ENCODE measurements at regions of chr17 and their contacts with region 1.

Region 1: DNA sequence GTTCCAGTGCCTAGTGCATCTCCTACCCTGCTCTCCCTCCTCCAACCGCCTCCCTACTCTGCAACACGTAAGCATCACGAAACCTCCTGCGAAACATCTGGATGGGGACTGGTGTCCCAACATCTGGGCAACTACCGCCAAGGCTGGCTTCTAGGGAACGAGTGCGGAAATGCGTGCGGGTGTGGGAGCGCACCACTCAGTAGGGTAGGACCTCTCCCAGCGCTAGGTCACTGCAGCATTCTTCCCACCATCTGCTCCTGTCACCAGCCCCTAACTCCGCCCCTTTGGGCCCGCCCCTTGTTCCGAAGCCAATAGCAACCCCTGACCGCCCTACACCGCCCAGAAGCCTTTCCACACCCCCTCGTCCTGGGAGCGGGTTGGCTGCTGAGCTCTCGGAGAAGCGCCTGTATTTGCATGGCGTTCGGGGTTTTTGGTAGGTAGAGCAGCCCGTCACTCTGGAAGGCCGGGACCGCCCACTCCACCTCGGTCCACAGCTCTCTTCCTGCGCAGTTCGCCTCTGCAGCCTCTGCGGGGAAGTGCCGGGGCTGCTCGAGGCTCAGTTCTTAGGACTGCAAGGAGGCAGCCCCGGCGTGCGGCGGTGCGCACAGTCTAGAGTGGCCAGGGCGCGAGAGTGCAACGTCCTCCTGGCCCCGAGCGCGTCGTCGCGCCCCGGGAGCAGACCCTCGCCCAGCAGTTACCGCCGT is at the start of gene HS3ST3B1:
- DNase-seq: peak; percentile 89
- H3K4me3 ChIP-seq: peak within 1 kb of the TSS in 1 of 3 experiments; percentile 24
- H3K27ac ChIP-seq: no peak within 1 kb of the TSS
- H3K4me1 ChIP-seq: peaks cover 23% of the 10 kb centered on the region
- H3K27me3 ChIP-seq: peaks cover 72 to 96% of the 10 kb centered on the region in 2 experiments
- CTCF ChIP-seq: no peak
- POLR2A ChIP-seq: no peak
- total RNA-seq, gene HS3ST3B1: not detected in 2 replicates

Region 2: GRCh38 chr17:13337864-13338371 is 962.8 kb before region 1 on chr17:
- CTCF ChIA-PET with region 1: interaction called, 13 read pairs
- POLR2A ChIA-PET with region 1: no interaction called
- dilution Hi-C with region 1: no loop called
- intact Hi-C with region 1: loop called (anchors 1 kb)
- DNase-seq: peak; percentile 18
- H3K4me3 ChIP-seq: no peak overlapping the region
- H3K27ac ChIP-seq: no peak overlapping the region
- H3K4me1 ChIP-seq: no peaks in the 10 kb centered on the region
- H3K27me3 ChIP-seq: no peaks in the 10 kb centered on the region
- CTCF ChIP-seq: peak; percentile 42 to 48
- POLR2A ChIP-seq: no peak

Region 3: DNA sequence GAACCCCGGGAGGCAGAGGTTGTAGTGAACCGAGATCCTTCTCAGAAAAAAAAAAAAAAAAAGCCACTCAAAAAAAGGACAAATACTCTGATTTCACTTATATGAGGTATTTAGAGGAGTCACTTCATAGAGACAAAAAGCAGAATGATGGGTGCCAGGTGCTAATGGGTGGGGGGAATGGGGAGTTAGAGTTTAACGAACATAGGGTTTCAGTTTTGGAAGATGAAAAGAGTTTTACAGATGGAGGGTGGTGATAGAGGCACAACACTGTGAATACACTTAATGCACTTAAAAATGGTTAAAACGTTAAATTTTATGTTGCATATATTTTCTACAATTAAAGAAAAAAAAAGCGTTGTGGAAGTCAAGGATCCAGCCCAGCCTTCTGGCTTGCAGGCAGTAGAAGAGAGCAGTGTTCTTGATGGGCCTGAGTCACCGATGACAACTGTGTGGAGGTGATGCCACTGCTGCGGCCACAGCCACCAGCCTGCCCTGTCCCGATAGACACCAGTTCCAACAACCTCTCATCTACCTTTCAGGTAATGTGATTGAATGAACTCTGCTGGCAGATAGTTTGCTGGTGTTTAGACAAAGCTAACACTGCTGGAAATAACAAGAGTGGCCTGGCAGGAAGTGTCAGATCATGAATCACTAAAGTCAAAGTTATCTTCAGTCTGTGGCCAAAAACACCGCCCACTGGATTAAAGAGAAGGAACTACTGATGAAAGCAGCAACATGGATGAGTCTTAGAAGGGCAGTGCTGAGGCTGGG is 281.4 kb before region 1 on chr17:
- CTCF ChIA-PET with region 1: no interaction called
- POLR2A ChIA-PET with region 1: no interaction called
- dilution Hi-C with region 1: no loop called
- intact Hi-C with region 1: loop called (anchors 10 kb)
- DNase-seq: no peak
- H3K4me3 ChIP-seq: no peak overlapping the region
- H3K27ac ChIP-seq: no peak overlapping the region
- H3K4me1 ChIP-seq: no peaks in the 10 kb centered on the region
- H3K27me3 ChIP-seq: no peaks in the 10 kb centered on the region
- CTCF ChIP-seq: no peak
- POLR2A ChIP-seq: no peak

Region 4: GRCh38 chr17:14091367-14091766 is 209.4 kb before region 1 on chr17:
- CTCF ChIA-PET with region 1: no interaction called
- POLR2A ChIA-PET with region 1: no interaction called
- dilution Hi-C with region 1: no loop called
- intact Hi-C with region 1: loop called (anchors 1 kb)
- DNase-seq: peak; percentile 40
- H3K4me3 ChIP-seq: no peak overlapping the region
- H3K27ac ChIP-seq: no peak overlapping the region
- H3K4me1 ChIP-seq: peaks cover 13% of the 10 kb centered on the region
- H3K27me3 ChIP-seq: no peaks in the 10 kb centered on the region
- CTCF ChIP-seq: no peak
- POLR2A ChIP-seq: no peak

Region 5: DNA sequence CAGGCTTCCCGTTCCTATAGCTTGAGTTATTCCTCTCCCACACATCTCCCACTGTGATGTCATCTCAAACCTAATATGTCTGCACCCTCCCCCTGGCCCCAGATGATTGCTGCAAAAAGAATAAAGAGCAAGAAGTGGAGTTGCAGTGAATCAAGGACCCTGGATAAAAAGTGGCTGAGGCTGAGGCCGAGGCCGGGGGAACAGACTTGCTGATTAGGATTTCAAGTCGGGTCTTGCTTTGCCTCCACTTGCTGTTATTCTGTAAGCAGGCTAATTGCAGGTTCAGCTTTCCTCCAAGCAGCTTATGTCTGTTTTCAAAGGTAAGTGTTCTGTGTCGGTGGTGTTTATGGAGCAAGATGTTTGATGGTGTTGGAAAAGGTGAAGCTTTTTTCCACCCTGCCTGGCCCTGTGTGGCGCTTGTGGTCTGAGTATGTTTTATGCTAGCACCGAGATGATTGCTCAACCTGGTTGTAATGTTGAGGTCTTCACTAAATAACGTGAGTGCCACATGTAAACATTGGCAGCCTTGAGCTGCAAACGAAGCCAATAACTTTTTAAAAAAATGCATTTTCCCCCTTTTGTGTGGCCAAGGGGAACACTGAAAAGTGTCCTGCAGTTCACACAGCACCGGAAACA is 15.5 kb after region 1 on chr17:
- CTCF ChIA-PET with region 1: no interaction called
- POLR2A ChIA-PET with region 1: no interaction called
- dilution Hi-C with region 1: no loop called
- intact Hi-C with region 1: no loop called
- DNase-seq: no peak
- H3K4me3 ChIP-seq: no peak overlapping the region
- H3K27ac ChIP-seq: no peak overlapping the region
- H3K4me1 ChIP-seq: no peaks in the 10 kb centered on the region
- H3K27me3 ChIP-seq: no peaks in the 10 kb centered on the region
- CTCF ChIP-seq: no peak
- POLR2A ChIP-seq: no peak